Activated naive CD4-positive, alpha-beta T cell treated with anti-CD3 and anti-CD28 coated beads for 36 hours (primary cell): ENCODE measurements at regions of chr14 and their contacts with region 1.

Region 1: DNA sequence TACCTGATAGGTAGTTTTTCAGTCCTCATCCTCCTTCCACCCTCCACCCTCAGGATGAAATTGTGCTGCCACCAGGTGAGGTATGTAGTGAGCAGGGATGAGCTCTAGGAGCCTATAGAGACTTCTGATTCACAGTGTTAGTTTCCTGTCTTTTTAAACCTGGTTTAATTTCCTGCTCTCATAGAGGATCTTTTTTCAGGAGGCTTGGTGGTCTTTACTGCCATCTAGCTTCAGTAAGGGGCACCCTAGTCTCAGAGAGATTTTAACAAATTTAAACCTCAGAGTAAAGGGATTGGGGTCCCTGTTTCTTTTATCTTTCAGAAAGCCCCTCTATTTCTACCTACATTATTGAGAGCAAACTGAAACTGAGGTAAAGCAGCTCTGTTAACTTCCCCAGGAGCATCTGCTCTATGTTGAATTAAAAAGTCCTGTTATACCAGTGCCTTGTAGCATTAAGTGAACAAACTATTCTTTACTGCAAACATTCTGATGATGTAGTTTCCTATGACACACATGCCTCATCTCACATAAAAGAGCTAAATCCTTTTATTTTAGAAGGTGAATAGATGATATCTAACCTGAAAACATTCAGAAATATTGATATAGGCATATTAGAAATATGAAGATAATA is 172.2 kb upstream of the DDHD1 start:
- DNase-seq: no peak
- H3K4me3 Mint-ChIP-seq: no peak overlapping the region
- H3K27ac Mint-ChIP-seq: no peak overlapping the region
- H3K4me1 Mint-ChIP-seq: no peaks in the 10 kb centered on the region
- H3K27me3 Mint-ChIP-seq: no peaks in the 10 kb centered on the region

Region 2: DNA sequence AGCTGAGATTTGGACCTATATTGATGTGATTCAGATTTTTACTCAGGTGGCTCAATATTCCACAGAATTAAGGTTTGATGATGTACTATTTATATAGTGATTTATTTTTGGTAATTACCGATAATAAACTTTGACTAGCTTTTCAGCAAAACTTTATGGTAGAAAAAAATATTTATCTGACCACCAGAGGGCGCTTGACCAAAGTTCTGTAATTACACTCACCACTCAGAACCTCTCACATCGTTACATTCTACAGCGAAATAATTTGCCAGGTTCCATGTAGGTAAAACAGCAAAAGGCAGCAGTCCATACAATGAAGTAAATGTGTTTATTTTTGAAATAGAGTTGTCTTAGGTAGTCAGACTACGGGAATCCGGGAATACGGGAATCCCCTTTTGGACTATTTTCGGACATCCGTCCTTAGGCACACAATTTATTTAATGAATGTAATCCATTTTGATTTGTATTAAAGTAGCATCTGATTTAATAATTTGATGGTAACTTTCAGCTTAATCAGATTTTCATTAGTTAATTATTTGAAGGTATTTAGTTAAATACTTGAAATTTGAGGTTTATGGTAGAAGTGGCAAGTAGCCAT is 29.2 kb before region 1 on chr14:
- CTCF ChIA-PET with region 1: interaction called, 11 read pairs
- intact Hi-C with region 1: no loop called
- DNase-seq: peak; percentile 22
- H3K4me3 Mint-ChIP-seq: no peak overlapping the region
- H3K27ac Mint-ChIP-seq: no peak overlapping the region
- H3K4me1 Mint-ChIP-seq: no peaks in the 10 kb centered on the region
- H3K27me3 Mint-ChIP-seq: no peaks in the 10 kb centered on the region